ENCODE measurements at regions of chr1 and their contacts with region 1.

Region 1: DNA sequence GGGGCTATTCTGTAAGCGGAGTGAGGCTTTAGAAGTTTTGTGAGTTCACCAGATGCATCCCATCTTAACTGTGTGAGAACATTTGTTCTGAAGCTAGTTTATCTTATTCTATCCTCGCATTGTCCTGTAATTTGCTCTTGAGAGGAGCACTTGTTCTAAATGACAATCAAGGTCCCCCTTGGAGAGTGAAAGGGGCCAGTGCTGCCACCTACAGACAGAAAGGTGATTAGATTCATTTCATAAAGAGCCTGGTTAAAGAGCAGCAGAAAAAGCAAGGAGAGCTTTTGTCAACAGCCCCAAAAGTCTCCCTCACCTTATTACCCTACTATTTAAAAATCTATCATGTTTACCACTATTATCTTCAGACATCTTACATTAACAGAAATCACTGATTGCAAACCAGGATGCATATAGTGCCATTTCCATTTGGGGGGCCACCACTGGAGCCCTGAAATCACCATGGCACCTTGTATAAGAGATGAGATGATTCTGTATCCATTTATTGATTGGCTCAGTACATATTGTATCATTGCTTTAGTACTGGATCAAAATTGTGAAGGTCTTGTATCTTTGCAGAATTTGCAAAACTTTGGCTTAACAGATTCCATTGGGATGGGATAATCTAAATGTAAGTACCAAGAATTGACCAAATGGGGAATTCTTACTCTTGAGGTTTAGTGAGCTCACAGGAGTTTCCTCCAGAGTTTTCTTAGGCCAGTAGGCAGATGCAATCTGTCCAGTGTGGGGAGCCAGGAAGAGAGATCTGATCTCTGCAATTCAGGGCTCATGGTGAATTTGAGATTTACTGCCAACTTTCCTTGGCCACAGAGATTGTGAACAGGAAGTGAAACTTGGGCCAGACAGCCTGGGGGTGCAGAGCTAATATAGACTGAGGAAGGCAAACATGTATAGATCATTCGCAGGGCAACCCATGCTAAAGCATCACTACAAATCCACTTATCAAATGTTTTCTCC is 64.3 kb upstream of the TRABD2B start:
- DNase-seq: peak; percentile 55
- H3K4me3 ChIP-seq: no peak overlapping the region
- H3K27ac ChIP-seq: no peak overlapping the region
- H3K4me1 ChIP-seq: no peaks in the 10 kb centered on the region
- H3K27me3 ChIP-seq: no peaks in the 10 kb centered on the region
- CTCF ChIP-seq: peak; percentile 74 to 82

Region 2: GRCh38 chr1:47725992-47726855 is 335.2 kb before region 1 on chr1:
- CTCF ChIA-PET with region 1: no interaction called
- dilution Hi-C with region 1: no loop called
- in situ Hi-C with region 1: loop called (anchors 10 to 25 kb)
- intact Hi-C with region 1: no loop called
- DNase-seq: peak; percentile 58
- H3K4me3 ChIP-seq: peak overlapping the region in 1 of 3 experiments; percentile 8
- H3K27ac ChIP-seq: no peak overlapping the region
- H3K4me1 ChIP-seq: peaks cover 20% of the 10 kb centered on the region
- H3K27me3 ChIP-seq: no peaks in the 10 kb centered on the region
- CTCF ChIP-seq: peak; percentile 94

Region 3: GRCh38 chr1:47785561-47786271 is 275.7 kb before region 1 on chr1:
- CTCF ChIA-PET with region 1: no interaction called
- dilution Hi-C with region 1: no loop called
- in situ Hi-C with region 1: no loop called
- intact Hi-C with region 1: loop called (anchors 1 kb)
- DNase-seq: peak; percentile 6
- H3K4me3 ChIP-seq: no peak overlapping the region
- H3K27ac ChIP-seq: no peak overlapping the region
- H3K4me1 ChIP-seq: no peaks in the 10 kb centered on the region
- H3K27me3 ChIP-seq: no peaks in the 10 kb centered on the region
- CTCF ChIP-seq: peak; percentile 22 to 52

Region 4: DNA sequence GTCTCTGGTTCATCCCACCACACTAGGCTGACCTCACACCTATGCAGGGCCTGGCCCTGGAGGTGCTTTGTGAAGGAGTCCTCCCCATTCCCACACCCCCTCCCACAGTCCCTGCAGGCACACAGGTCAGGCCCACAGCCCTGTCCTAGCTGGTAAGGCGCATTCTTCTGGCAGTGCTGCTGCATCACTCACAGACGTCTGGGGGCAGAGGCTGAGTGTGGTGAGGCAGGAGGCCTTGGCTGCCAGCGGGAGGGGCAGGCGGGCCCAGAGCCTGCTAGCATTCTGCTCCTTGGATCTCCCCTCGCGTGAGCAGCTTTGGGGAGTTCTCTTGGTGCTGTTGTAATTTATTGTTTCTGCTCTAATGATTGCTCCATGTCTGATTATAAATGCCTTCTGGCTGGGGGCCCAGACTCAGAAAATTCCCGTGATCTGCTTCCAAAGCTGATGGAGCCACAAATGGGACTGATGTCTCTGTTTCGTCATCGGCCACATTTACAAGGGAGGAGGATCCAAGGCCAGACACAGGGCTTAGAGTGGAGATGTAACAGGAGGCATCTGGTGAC is 127.1 kb before region 1 on chr1:
- CTCF ChIA-PET with region 1: no interaction called
- dilution Hi-C with region 1: loop called (anchors 10 kb)
- in situ Hi-C with region 1: no loop called
- intact Hi-C with region 1: no loop called
- DNase-seq: no peak
- H3K4me3 ChIP-seq: no peak overlapping the region
- H3K27ac ChIP-seq: no peak overlapping the region
- H3K4me1 ChIP-seq: peaks cover 4% of the 10 kb centered on the region
- H3K27me3 ChIP-seq: no peaks in the 10 kb centered on the region
- CTCF ChIP-seq: no peak

Region 5: GRCh38 chr1:47997289-47998200 is 63.9 kb before region 1 on chr1 and contains the start of gene TRABD2B:
- CTCF ChIA-PET with region 1: interaction called, 4 read pairs
- dilution Hi-C with region 1: loop called (anchors 5 kb)
- in situ Hi-C with region 1: loop called (anchors 5 to 10 kb)
- intact Hi-C with region 1: loop called (anchors 1 kb)
- DNase-seq: peak; percentile 69
- H3K4me3 ChIP-seq: peak within 1 kb of the TSS; percentile 57 to 75 (median 69)
- H3K27ac ChIP-seq: no peak within 1 kb of the TSS
- H3K4me1 ChIP-seq: peaks cover 23% of the 10 kb centered on the region
- H3K27me3 ChIP-seq: no peaks in the 10 kb centered on the region
- CTCF ChIP-seq: peak; percentile 55 to 96
- total RNA-seq, gene TRABD2B: 1.2 TPM